K562 (cell line): ENCODE measurements at regions of chr12 and their contacts with region 1.

Region 1: DNA sequence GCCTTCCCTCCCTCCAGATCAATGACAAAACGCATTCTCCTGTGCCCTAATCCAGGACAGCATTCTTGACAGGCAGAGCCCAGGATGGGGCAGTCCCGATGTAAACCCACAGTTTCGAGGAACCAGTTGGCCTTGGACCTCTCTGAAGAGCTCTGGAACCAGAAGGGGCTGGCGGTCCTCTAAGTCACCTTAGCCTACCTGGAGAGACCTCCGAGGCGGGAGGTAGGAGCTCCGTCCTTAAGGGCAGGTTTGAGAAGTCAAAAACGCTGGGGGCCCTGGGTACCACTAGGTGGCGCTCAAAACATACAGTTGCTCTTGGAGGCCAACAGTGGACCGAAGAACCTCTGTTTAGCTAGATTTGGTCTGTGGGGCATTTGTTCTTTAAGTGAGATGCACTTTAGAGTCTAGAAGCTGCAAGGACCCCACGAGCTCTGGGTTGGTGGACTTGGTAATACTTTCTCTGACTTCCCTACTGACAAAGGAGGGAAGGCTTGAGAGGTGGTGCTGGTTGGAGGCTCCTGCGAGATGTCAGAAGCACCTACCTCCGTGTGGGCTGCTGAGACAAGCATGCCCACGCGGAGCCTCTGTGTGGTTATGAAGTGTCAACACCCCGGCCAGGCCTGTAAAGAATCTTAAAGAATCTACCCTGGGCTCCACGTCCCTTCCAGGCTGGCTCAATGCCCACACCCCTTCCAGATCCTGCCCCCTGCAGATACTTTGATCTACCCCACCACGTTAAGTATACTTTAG is 74.8 kb upstream of the CHST11 start:
- DNase-seq: peak; percentile 79 to 89 (median 81)
- ATAC-seq: peak; percentile 97
- H3K4me3 ChIP-seq: no peak overlapping the region
- H3K27ac ChIP-seq: no peak overlapping the region
- H3K4me1 ChIP-seq: peaks cover 0 to 3% of the 10 kb centered on the region in 2 experiments; a peak in 3 of 5 replicates
- H3K27me3 ChIP-seq: no peaks in the 10 kb centered on the region
- CTCF ChIP-seq: peak; percentile 90 to 95 (median 95)
- EP300 ChIP-seq: no peak
- POLR2A ChIP-seq: no peak
- RAD21 ChIP-seq: peak; percentile 98

Region 2: DNA sequence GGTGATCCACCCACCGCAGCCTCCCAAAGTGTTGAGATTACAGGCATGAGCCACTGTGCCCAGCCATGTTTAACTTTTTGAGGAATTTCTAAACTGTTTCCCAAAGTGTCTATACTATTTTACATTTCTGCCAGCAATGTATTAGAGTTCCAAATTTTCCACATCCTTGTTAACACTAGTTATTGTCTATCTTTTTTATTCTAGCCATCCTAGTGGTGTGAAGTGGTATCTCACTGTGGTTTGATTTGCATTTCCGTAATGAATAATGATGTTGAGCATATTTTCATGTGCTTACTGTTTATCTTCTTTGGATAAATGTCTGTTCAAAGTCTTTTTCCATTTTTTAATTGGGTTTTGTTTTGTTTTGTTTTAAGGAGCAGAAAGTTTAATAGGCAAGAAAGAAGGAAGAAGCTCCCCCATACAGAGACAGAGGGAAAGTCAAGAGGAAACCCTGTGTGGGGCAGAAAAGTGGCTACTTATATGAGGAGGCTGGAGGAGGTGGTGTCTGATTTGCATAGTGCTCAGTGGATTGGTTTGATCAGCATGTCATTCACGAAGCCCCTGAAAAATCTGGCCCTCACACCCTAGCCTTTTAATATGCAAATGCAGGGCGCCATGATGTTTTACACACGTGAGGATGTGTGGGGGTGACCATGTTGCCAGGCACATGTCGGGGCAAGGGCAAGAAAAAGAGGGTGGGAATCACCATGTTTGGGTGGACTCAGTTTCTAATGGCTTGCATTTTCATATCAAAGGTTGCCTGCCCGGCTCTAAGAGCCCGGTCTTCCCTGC is 151.4 kb before region 1 on chr12:
- CTCF ChIA-PET with region 1: no interaction called
- POLR2A ChIA-PET with region 1: no interaction called
- in situ Hi-C with region 1: no loop called
- intact Hi-C with region 1: no loop called
- DNase-seq: no peak
- ATAC-seq: peak; percentile 48; the same call in 2 of the 3 replicates
- H3K4me3 ChIP-seq: no peak overlapping the region
- H3K27ac ChIP-seq: no peak overlapping the region
- H3K4me1 ChIP-seq: no peaks in the 10 kb centered on the region
- H3K27me3 ChIP-seq: no peaks in the 10 kb centered on the region; a peak in 1 of 5 replicates
- CTCF ChIP-seq: no peak
- EP300 ChIP-seq: no peak
- POLR2A ChIP-seq: no peak
- RAD21 ChIP-seq: no peak

Region 3: GRCh38 chr12:104427011-104427461 is 45.1 kb after region 1 on chr12:
- CTCF ChIA-PET with region 1: no interaction called
- POLR2A ChIA-PET with region 1: no interaction called
- in situ Hi-C with region 1: no loop called
- intact Hi-C with region 1: no loop called
- DNase-seq: no peak
- ATAC-seq: no peak
- H3K4me3 ChIP-seq: no peak overlapping the region
- H3K27ac ChIP-seq: no peak overlapping the region
- H3K4me1 ChIP-seq: peaks cover 0 to 2% of the 10 kb centered on the region in 2 experiments; a peak in 1 of 5 replicates
- H3K27me3 ChIP-seq: peaks cover 7 to 8% of the 10 kb centered on the region in 2 experiments; a peak in 3 of 5 replicates
- CTCF ChIP-seq: no peak
- EP300 ChIP-seq: no peak
- POLR2A ChIP-seq: no peak
- RAD21 ChIP-seq: no peak

Region 4: GRCh38 chr12:104456417-104456949 is 74.6 kb after region 1 on chr12 and contains the start of gene CHST11:
- CTCF ChIA-PET with region 1: no interaction called
- POLR2A ChIA-PET with region 1: interaction called, 3 read pairs
- in situ Hi-C with region 1: loop called (anchors 5 kb)
- intact Hi-C with region 1: loop called (anchors 5 kb)
- DNase-seq: peak; percentile 93 to 97 (median 94)
- ATAC-seq: peak; percentile 89
- H3K4me3 ChIP-seq: peak within 1 kb of the TSS; percentile 97
- H3K27ac ChIP-seq: peak within 1 kb of the TSS; percentile 81
- H3K4me1 ChIP-seq: peaks cover 28 to 37% of the 10 kb centered on the region in 2 experiments
- H3K27me3 ChIP-seq: no peaks in the 10 kb centered on the region
- CTCF ChIP-seq: peak; percentile 35 to 53 (median 38); a peak in 4 of 6 replicates
- EP300 ChIP-seq: peak; percentile 18; the same call in 1 of the 2 replicates
- POLR2A ChIP-seq: peak; percentile 39; the same call in 1 of the 2 replicates
- RAD21 ChIP-seq: peak; percentile 54 to 59
- polyA plus RNA-seq, gene CHST11: 2.3 to 2.9 TPM

Region 5: GRCh38 chr12:104669736-104670341 is 287.9 kb after region 1 on chr12:
- CTCF ChIA-PET with region 1: interaction called, 3 read pairs
- POLR2A ChIA-PET with region 1: interaction called, 3 read pairs
- in situ Hi-C with region 1: loop called (anchors 10 kb)
- intact Hi-C with region 1: loop called (anchors 5 kb)
- DNase-seq: no peak
- ATAC-seq: no peak
- H3K4me3 ChIP-seq: no peak overlapping the region
- H3K27ac ChIP-seq: no peak overlapping the region
- H3K4me1 ChIP-seq: peaks cover 30 to 41% of the 10 kb centered on the region in 2 experiments; a peak in 4 of 5 replicates
- H3K27me3 ChIP-seq: no peaks in the 10 kb centered on the region
- CTCF ChIP-seq: no peak
- EP300 ChIP-seq: no peak
- POLR2A ChIP-seq: no peak
- RAD21 ChIP-seq: no peak

Region 6: GRCh38 chr12:104825408-104825807 is 443.5 kb after region 1 on chr12:
- CTCF ChIA-PET with region 1: interaction called, 5 read pairs
- POLR2A ChIA-PET with region 1: no interaction called
- in situ Hi-C with region 1: no loop called
- intact Hi-C with region 1: loop called (anchors 1 kb)
- DNase-seq: peak; percentile 25 to 69 (median 32)
- ATAC-seq: peak; percentile 82
- H3K4me3 ChIP-seq: no peak overlapping the region
- H3K27ac ChIP-seq: no peak overlapping the region
- H3K4me1 ChIP-seq: peaks cover 4 to 6% of the 10 kb centered on the region in 2 experiments; a peak in 4 of 5 replicates
- H3K27me3 ChIP-seq: no peaks in the 10 kb centered on the region
- CTCF ChIP-seq: peak; percentile 70 to 79 (median 77)
- EP300 ChIP-seq: no peak
- POLR2A ChIP-seq: no peak
- RAD21 ChIP-seq: peak; percentile 53 to 88

Region 7: GRCh38 chr12:104958009-104958945 is 576.4 kb after region 1 on chr12 and contains the start of gene SLC41A2:
- CTCF ChIA-PET with region 1: no interaction called
- POLR2A ChIA-PET with region 1: no interaction called
- in situ Hi-C with region 1: no loop called
- intact Hi-C with region 1: loop called (anchors 10 kb)
- DNase-seq: peak; percentile 81 to 90 (median 88)
- ATAC-seq: peak; percentile 93
- H3K4me3 ChIP-seq: peak within 1 kb of the TSS; percentile 48
- H3K27ac ChIP-seq: peak within 1 kb of the TSS; percentile 27; the same call in 2 of the 3 replicates
- H3K4me1 ChIP-seq: peaks cover 18% of the 10 kb centered on the region in 2 experiments; a peak in 4 of 5 replicates
- H3K27me3 ChIP-seq: peaks cover 17 to 27% of the 10 kb centered on the region in 2 experiments
- CTCF ChIP-seq: peak in 1 of 3 experiments; percentile 29; a peak in 1 of 6 replicates
- EP300 ChIP-seq: no peak; the same call in 1 of the 2 replicates
- POLR2A ChIP-seq: no peak
- RAD21 ChIP-seq: no peak
- polyA plus RNA-seq, gene SLC41A2: 0.01 to 0.08 TPM

Region 8: DNA sequence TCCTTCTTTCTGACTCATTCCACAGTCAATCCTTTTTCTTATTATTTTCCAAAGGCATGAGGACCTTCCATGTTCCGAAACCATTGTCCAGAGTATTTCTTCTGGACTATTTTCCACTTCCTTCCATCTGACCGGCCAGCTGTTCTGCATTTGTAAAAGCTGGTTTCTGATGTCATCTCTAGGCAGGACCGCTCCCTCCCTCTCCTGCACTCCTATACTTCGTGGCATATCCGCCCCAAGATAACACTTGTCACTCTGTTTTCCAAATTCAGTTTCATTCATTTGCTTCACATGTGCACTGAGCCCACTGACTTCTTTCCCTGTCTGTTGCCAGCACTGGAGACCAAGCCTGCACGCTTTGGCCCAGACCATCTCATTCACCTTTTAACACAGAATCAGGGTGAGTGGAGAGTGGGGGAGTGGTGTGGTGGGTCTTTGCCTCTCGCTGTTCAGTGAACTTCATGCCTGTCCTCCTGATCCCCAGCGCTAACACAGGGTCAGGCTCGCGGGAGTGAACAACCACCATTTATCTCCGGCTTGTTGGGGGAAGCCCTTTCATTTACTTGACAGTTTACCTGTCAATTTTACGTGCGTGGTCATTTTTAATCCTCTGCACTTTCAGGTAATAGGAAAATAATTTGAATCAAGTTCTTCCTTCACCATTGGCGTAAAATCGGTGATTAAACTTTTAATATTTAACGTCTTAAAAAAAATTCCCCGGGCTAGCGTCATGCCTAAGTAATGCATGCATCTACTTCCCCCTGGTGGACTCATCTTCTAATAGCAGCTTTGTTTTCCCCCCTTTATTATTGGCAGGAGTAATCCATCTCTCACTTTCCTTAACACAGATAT is 1001.1 kb after region 1 on chr12:
- CTCF ChIA-PET with region 1: interaction called, 5 read pairs
- POLR2A ChIA-PET with region 1: no interaction called
- in situ Hi-C with region 1: no loop called
- intact Hi-C with region 1: loop called (anchors 10 kb)
- DNase-seq: peak; percentile 59 to 63 (median 62)
- ATAC-seq: peak; percentile 88
- H3K4me3 ChIP-seq: no peak overlapping the region
- H3K27ac ChIP-seq: no peak overlapping the region
- H3K4me1 ChIP-seq: peaks cover 0 to 5% of the 10 kb centered on the region in 2 experiments; a peak in 1 of 5 replicates
- H3K27me3 ChIP-seq: peaks cover 0 to 24% of the 10 kb centered on the region in 2 experiments; a peak in 4 of 5 replicates
- CTCF ChIP-seq: peak; percentile 66 to 85 (median 76)
- EP300 ChIP-seq: no peak
- POLR2A ChIP-seq: no peak
- RAD21 ChIP-seq: peak; percentile 84 to 86